WTC11 (cell line): ENCODE measurements at regions of chr9 and their contacts with region 1.

Region 1: DNA sequence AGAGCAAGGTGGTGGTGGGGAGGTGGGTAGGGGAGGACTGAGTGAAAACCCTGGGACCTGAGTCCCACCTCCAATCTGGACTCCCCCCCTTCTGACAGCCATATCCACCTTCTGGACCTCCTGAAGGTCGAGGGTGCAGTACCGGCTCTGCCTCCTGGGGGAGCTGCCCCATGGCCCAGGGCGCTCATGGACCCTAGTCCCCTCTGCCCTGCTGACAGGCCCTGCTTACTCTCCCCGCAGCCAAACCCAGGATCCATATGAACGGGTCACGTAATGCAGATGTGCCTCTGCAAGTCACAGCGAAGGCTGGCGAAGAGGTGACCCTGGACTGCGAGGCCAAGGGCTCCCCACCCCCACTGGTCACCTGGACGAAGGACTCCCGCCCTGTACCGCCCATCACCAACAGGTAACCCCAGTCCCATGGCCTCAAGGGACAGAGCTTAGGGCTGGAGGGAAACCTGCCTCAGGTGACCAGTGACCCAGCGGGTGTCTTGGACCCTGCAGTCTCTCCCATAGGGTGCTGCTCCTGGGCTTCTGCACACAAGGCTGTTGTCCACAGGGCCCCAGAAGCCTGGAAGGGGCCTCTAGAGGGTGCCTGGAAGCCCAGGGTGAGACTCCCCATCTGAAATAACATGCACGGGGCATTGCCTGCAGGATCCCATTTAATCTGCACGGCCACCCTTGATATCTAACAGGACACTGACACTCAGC is 61.7 kb downstream of the HMCN2 start:
- DNase-seq: peak; percentile 87
- ATAC-seq: peak; percentile 93
- H3K4me3 Mint-ChIP-seq: no peak overlapping the region
- H3K27ac Mint-ChIP-seq: no peak overlapping the region
- H3K4me1 Mint-ChIP-seq: peaks cover 11% of the 10 kb centered on the region
- H3K27me3 Mint-ChIP-seq: no peaks in the 10 kb centered on the region; the same call in 1 of the 2 replicates
- CTCF ChIP-seq: peak; percentile 79

Region 2: GRCh38 chr9:130313103-130313858 is 13.9 kb before region 1 on chr9:
- CTCF ChIA-PET with region 1: interaction called, 31 read pairs
- POLR2A ChIA-PET with region 1: no interaction called
- DNase-seq: no peak
- ATAC-seq: no peak
- H3K4me3 Mint-ChIP-seq: no peak overlapping the region
- H3K27ac Mint-ChIP-seq: no peak overlapping the region
- H3K4me1 Mint-ChIP-seq: peaks cover 17% of the 10 kb centered on the region
- H3K27me3 Mint-ChIP-seq: no peaks in the 10 kb centered on the region
- CTCF ChIP-seq: no peak

Region 3: DNA sequence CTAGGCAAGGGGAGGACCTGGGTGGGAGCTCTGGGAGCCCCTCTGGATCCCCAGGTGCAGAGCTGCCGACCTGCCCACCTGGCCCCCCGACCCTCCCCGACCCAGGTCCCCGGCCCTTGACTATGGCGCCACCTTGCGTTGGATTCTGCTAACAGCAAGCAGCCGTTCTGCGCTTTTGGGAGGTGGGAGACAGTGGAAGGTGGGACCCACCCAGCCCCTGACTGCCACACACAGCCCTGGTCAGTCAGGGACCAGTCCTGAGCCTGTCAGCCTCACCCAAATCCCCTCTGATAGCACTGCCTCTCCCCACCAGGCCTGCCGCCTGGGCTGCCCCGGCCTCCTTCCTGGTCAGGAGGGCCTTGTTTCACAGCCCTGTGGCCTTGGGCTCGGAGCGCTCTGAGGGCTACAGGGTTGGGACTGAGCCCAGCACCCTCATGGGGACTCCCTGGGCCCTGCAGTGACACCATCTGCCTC is 16.3 kb after region 1 on chr9:
- CTCF ChIA-PET with region 1: interaction called, 11 read pairs
- POLR2A ChIA-PET with region 1: no interaction called
- DNase-seq: peak; percentile 89
- ATAC-seq: peak; percentile 69
- H3K4me3 Mint-ChIP-seq: no peak overlapping the region
- H3K27ac Mint-ChIP-seq: no peak overlapping the region
- H3K4me1 Mint-ChIP-seq: 0 out of 2 replicates have a peak, but pooled peaks cover 3% of the 10 kb centered on the region
- H3K27me3 Mint-ChIP-seq: no peaks in the 10 kb centered on the region
- CTCF ChIP-seq: peak; percentile 87

Region 4: DNA sequence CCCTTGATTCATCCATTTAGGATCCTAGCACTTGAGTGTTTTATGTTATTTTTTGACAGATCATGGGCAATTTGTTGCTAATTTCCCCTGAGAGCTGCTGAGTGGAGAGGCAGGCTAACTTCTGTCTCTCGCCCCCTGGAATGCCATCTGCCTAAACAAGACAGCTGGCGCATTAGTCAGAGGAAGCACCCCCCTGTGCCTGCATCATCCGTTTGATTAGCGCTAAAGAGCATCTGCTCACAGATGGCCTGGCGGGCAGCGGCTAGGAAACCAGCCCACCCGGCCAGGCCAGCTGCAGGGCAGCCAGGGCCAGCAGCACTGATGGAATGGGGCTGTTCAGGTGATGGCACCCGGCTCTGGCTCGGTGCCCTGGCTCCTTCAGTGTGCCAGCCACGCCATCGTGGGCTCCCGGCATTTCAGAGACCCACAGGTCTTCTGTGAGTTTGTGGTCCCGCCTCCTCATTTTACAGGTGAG is 94.6 kb after region 1 on chr9:
- CTCF ChIA-PET with region 1: interaction called, 10 read pairs
- POLR2A ChIA-PET with region 1: no interaction called
- DNase-seq: peak; percentile 47
- ATAC-seq: peak; percentile 64
- H3K4me3 Mint-ChIP-seq: no peak overlapping the region
- H3K27ac Mint-ChIP-seq: peak overlapping the region; percentile 12; the same call in 1 of the 2 replicates
- H3K4me1 Mint-ChIP-seq: peaks cover 23% of the 10 kb centered on the region
- H3K27me3 Mint-ChIP-seq: no peaks in the 10 kb centered on the region
- CTCF ChIP-seq: no peak

Region 5: GRCh38 chr9:130467371-130467770 is 140.1 kb after region 1 on chr9:
- CTCF ChIA-PET with region 1: no interaction called
- POLR2A ChIA-PET with region 1: no interaction called
- DNase-seq: no peak
- ATAC-seq: peak; percentile 48
- H3K4me3 Mint-ChIP-seq: no peak overlapping the region
- H3K27ac Mint-ChIP-seq: no peak overlapping the region
- H3K4me1 Mint-ChIP-seq: peaks cover 16% of the 10 kb centered on the region
- H3K27me3 Mint-ChIP-seq: no peaks in the 10 kb centered on the region
- CTCF ChIP-seq: no peak